H1 (cell line): ENCODE measurements at regions of chr17 and their contacts with region 1.

Region 1: GRCh38 chr17:12342609-12343435 is 322.1 kb downstream of the MAP2K4 start:
- DNase-seq: peak; percentile 36 to 94
- H3K4me3 ChIP-seq: no peak overlapping the region
- H3K27ac ChIP-seq: no peak overlapping the region
- H3K4me1 ChIP-seq: no peaks in the 10 kb centered on the region
- H3K27me3 ChIP-seq: no peaks in the 10 kb centered on the region
- CTCF ChIP-seq: peak; percentile 73 to 79 (median 73)
- EP300 ChIP-seq: no peak
- POLR2A ChIP-seq: no peak
- RAD21 ChIP-seq: peak; percentile 80 to 88

Region 2: DNA sequence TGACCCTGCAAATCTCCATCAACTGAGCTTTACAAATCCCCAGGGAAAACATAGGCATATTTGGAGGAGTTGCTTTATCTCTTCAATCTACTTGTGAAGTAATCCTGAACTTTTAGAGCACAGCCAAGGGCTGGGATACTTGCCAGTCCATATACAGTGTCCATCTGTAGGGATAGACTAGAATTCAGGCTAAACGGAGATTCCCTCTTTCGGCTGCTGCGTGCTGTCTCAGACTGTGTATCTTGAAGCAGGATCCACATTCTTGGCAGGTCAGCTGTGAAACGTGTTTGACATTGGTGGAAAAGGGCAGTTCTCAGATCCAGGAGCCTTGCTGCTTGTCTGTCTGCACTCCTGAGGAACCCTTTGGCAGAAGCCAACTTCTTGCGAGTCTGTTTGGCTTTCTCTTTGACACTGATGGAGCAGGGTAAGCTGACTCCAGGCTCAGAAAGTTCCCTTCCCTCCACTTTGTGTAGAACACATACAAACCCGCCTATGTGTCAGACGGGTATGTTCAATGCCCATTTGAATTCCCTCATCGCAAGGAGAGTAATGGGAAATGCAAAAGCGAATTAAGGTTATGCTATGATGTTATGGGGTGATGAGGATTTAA is 100.4 kb before region 1 on chr17:
- CTCF ChIA-PET with region 1: no interaction called
- POLR2A ChIA-PET with region 1: no interaction called
- DNase-seq: no peak
- H3K4me3 ChIP-seq: no peak overlapping the region
- H3K27ac ChIP-seq: no peak overlapping the region
- H3K4me1 ChIP-seq: no peaks in the 10 kb centered on the region
- H3K27me3 ChIP-seq: no peaks in the 10 kb centered on the region
- CTCF ChIP-seq: no peak
- EP300 ChIP-seq: no peak
- POLR2A ChIP-seq: no peak
- RAD21 ChIP-seq: no peak

Region 3: GRCh38 chr17:12256380-12256995 is 86.3 kb before region 1 on chr17:
- CTCF ChIA-PET with region 1: interaction called, 12 read pairs
- POLR2A ChIA-PET with region 1: no interaction called
- DNase-seq: no peak
- H3K4me3 ChIP-seq: no peak overlapping the region
- H3K27ac ChIP-seq: no peak overlapping the region
- H3K4me1 ChIP-seq: no peaks in the 10 kb centered on the region
- H3K27me3 ChIP-seq: peaks cover 0 to 1% (median 0%) of the 10 kb centered on the region in 4 experiments; a peak in 1 of 7 replicates
- CTCF ChIP-seq: peak in 2 of 3 experiments; percentile 57 to 73; a peak in 3 of 4 replicates
- EP300 ChIP-seq: no peak
- POLR2A ChIP-seq: no peak
- RAD21 ChIP-seq: peak; percentile 86 to 88

Region 4: DNA sequence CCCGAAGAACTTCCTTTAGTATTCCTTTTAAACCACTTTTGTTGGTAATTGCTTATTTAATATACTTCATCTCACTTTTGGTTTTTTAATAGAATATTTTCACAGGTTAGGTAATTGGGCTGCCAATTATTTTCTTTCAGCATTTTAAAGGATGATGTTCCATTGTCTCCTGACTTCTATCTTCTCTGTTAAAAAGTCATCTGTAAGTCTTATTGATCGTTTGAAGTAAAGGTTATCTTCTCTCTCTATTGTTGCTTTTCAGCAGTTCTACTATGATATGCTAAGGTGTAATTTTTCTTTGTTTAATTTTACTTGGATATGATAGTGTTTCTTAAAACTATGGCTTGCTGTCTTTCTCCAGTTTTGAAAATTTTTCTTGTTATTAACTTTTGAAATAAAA is 14.6 kb before region 1 on chr17:
- CTCF ChIA-PET with region 1: interaction called, 10 read pairs
- POLR2A ChIA-PET with region 1: no interaction called
- DNase-seq: no peak
- H3K4me3 ChIP-seq: no peak overlapping the region
- H3K27ac ChIP-seq: no peak overlapping the region
- H3K4me1 ChIP-seq: no peaks in the 10 kb centered on the region
- H3K27me3 ChIP-seq: no peaks in the 10 kb centered on the region
- CTCF ChIP-seq: no peak
- EP300 ChIP-seq: no peak
- POLR2A ChIP-seq: no peak
- RAD21 ChIP-seq: no peak

Region 5: DNA sequence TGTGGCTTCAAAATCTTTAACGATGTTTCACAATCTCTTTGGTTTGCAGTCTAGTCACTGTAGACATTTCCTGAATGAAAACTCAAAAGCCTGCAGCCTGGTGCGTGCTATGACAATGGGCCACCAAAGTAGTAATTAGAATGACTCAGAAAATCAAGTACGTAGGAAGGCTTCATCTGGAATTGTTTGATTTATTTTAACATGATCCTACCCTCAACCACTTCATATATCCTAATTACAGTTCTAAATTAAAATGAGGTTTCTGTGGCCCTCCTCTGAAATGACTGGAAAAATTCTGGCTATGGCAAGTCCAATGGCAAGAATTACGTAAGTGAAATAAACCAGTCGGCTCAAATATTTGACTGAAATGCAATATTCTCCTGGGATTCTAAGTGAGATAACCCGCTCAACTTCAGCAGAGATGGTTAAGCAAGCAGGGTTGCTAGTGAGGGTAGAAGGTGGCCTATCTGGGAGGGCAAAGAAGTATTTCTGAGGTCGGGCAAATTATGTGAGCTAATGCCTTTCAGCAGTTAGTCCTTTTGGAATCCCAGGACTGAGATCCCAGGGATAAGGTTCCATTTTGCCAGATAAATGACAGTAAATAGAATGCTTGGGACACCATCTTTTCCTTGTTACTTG is 177.3 kb after region 1 on chr17:
- CTCF ChIA-PET with region 1: no interaction called
- POLR2A ChIA-PET with region 1: no interaction called
- DNase-seq: no peak
- H3K4me3 ChIP-seq: no peak overlapping the region
- H3K27ac ChIP-seq: no peak overlapping the region
- H3K4me1 ChIP-seq: no peaks in the 10 kb centered on the region; a peak in 1 of 7 replicates
- H3K27me3 ChIP-seq: no peaks in the 10 kb centered on the region
- CTCF ChIP-seq: no peak
- EP300 ChIP-seq: no peak
- POLR2A ChIP-seq: no peak
- RAD21 ChIP-seq: no peak